RWPE1 (cell line): ENCODE measurements at regions of chr6 and their contacts with region 1.

Region 1: GRCh38 chr6:131952886-131953509 is 1.8 kb upstream of the CCN2 start:
- DNase-seq: no peak
- H3K27ac ChIP-seq: no peak overlapping the region
- CTCF ChIP-seq: no peak

Region 2: DNA sequence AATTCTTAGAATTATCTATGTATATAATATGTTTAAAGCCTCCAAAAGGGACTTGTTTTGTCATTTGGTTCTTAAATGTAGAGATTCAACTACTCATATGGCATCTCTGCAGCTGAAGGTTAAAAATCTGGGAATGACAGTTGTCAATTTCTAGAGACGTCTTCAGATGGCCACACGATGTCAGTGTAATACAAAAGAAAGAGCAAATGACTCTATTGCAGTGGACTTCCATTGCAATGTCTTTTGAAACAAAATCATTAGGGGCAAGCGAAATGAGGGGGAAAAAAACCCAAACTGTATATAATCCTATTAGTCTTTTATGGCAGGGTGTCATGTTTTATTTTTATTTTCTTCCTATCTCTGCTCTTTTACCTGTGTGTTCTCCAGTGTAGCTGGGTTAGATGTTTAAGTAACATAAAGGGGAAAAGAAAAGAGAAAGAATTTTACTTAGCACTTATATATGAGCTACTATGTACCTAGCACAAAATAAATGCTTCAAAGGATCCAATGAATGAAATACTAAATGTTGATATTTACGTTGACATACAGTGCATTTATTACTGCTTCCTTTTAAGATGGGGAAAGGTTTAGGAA is 28.0 kb before region 1 on chr6:
- CTCF ChIA-PET with region 1: interaction called, 10 read pairs
- POLR2A ChIA-PET with region 1: no interaction called
- DNase-seq: peak; percentile 34
- H3K27ac ChIP-seq: no peak overlapping the region
- CTCF ChIP-seq: peak; percentile 65

Region 3: DNA sequence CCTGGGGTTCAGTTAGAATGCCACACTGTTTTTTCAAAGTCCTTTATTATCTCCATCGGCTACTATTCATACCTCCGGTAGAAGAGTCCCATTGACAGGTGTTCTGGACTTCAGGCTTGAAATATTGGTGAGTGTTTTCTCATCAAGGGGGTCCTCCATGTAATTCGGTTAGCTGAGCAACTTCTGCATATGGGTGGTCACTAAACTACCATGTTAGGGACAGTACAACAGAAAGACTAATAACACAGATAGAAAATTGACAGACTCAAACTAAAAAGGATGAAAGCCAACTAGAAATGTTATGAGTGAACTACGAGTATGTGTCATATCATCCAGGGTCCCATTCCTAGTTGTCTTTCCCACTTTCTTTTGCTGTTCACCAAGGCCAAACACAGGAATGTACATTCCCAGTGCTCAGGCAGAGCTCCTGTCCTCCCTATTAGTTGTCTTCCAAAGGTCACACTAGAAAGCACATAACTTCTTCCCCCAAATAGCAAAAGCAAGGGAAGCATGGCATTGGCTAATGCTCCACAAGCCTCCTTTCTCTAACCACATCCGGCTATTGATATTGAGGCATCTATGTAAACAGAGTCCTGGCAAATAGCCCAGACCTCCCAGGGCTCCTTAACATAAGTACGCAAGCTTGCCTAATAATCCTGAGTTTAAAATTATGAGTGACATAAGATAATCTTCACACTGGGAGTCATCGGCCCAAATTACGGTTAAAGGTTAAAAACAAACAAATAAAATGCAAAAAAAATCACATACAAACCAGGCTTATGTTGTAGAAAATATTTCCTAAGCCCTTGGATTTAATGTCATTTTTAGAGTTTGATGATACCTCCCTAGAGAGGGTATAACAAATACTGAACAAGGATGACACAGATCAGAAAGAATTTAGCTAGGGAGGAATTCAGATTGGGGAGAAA is 15.0 kb before region 1 on chr6:
- CTCF ChIA-PET with region 1: no interaction called
- POLR2A ChIA-PET with region 1: no interaction called
- DNase-seq: no peak
- H3K27ac ChIP-seq: no peak overlapping the region
- CTCF ChIP-seq: no peak